ENCODE measurements at regions of chr5 and their contacts with region 1.

Region 1: DNA sequence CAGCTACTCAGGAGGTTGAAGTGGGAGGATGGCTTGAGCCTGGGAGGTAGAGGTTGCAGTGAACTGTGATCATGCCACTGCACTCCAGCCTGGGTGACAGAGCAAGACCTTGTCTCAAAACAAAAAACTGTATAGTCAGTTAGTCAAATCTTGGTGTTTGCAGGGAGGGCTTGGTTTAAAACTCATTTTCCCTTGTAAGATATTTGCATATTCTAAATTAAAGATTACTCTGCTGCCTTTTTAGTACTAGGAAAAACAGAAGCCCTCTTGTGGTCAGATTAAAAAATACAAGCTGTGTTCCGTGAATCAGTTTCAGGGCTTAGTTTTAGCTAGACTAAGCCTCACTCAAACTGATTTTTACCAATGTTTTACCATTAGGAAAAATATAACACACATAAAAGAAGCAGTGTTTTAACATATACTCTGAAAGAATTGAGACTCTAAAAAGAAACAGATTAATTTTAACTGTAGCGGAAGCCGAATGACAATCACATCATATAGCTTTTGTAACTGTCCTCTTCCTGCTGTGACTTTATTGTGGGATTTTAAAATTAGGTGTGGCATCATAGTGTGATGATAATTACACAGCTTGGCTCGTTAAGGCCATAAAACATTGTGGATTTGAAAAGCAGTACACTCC is 84.9 kb upstream of the BASP1 start:
- DNase-seq: no peak
- ATAC-seq: peak; percentile 65
- H3K4me3 Mint-ChIP-seq: no peak overlapping the region
- H3K27ac Mint-ChIP-seq: no peak overlapping the region
- H3K4me1 Mint-ChIP-seq: peaks cover 9% of the 10 kb centered on the region
- H3K27me3 Mint-ChIP-seq: peaks cover under 1% of the 10 kb centered on the region
- CTCF ChIP-seq: peak; percentile 65

Region 2: DNA sequence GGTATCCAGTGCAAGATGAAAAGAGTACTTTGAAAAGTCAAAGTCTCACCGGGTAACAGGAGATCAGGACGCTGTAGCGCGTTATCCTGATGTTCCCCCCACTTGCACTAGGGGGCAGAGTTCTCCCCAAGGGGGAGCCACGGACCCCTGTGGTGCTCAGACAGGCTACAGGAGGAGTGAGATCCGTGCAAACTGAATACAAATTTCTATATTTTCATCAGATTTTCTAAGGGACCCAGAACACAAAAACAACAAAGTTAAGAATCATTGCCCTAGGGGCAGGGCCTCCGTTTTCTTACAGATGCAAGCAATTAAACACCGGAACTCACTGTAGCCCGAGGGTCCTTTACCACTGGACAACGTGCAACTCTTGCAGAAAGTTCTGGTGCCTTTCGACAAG is 198.4 kb before region 1 on chr5:
- CTCF ChIA-PET with region 1: interaction called, 17 read pairs
- POLR2A ChIA-PET with region 1: no interaction called
- DNase-seq: peak; percentile 91
- ATAC-seq: peak; percentile 14
- H3K4me3 Mint-ChIP-seq: peak overlapping the region; percentile 87
- H3K27ac Mint-ChIP-seq: no peak overlapping the region
- H3K4me1 Mint-ChIP-seq: peaks cover 61% of the 10 kb centered on the region
- H3K27me3 Mint-ChIP-seq: peaks cover 78% of the 10 kb centered on the region
- CTCF ChIP-seq: peak; percentile 91

Region 3: DNA sequence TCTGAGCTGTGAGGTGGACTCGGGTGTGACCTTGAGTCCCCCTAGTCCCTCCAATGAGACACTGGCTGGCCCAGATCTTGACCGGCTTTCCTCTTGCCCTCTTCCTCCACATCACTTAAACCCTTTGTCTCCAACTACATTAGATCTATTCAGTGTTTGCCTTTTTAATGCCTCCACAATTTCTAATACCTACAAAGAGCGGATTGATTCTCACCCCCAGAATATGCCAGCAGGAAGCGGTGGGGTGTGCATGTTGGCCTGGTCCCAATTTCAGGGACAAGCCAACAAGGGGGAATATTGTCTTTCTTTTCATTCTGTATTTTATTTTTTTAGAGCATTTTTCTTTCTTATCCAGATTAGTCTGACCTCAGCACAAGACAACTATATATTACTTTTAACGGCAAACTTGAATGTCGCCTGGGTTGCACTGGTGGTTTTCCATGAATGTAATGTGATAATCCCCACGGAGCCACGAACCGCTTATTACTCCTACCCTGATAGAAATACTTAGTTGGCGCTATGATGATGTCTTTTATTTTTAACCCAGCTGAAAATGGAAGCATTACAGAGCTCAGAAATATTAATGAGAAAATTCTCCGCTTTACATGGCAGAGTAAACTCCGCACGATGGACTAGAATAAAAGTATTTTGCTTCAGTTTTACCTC is 128.0 kb before region 1 on chr5:
- CTCF ChIA-PET with region 1: no interaction called
- POLR2A ChIA-PET with region 1: no interaction called
- DNase-seq: no peak
- ATAC-seq: no peak
- H3K4me3 Mint-ChIP-seq: no peak overlapping the region
- H3K27ac Mint-ChIP-seq: no peak overlapping the region
- H3K4me1 Mint-ChIP-seq: no peaks in the 10 kb centered on the region
- H3K27me3 Mint-ChIP-seq: no peaks in the 10 kb centered on the region
- CTCF ChIP-seq: no peak

Region 4: GRCh38 chr5:17143335-17143734 is 10.8 kb after region 1 on chr5:
- CTCF ChIA-PET with region 1: interaction called, 24 read pairs
- POLR2A ChIA-PET with region 1: no interaction called
- DNase-seq: no peak
- ATAC-seq: no peak
- H3K4me3 Mint-ChIP-seq: no peak overlapping the region
- H3K27ac Mint-ChIP-seq: no peak overlapping the region
- H3K4me1 Mint-ChIP-seq: peaks cover 51% of the 10 kb centered on the region
- H3K27me3 Mint-ChIP-seq: peaks cover 51% of the 10 kb centered on the region
- CTCF ChIP-seq: no peak

Region 5: GRCh38 chr5:17157916-17158529 is 25.5 kb after region 1 on chr5:
- CTCF ChIA-PET with region 1: interaction called, 21 read pairs
- POLR2A ChIA-PET with region 1: no interaction called
- DNase-seq: no peak
- ATAC-seq: no peak
- H3K4me3 Mint-ChIP-seq: no peak overlapping the region
- H3K27ac Mint-ChIP-seq: no peak overlapping the region
- H3K4me1 Mint-ChIP-seq: no peaks in the 10 kb centered on the region; the same call in 1 of the 2 replicates
- H3K27me3 Mint-ChIP-seq: peaks cover 4% of the 10 kb centered on the region; the same call in 1 of the 2 replicates
- CTCF ChIP-seq: no peak

Region 6: GRCh38 chr5:17316970-17317459 is 184.5 kb after region 1 on chr5:
- CTCF ChIA-PET with region 1: no interaction called
- POLR2A ChIA-PET with region 1: no interaction called
- DNase-seq: no peak
- ATAC-seq: no peak
- H3K4me3 Mint-ChIP-seq: no peak overlapping the region
- H3K27ac Mint-ChIP-seq: no peak overlapping the region; the same call in 1 of the 2 replicates
- H3K4me1 Mint-ChIP-seq: peaks cover 25% of the 10 kb centered on the region
- H3K27me3 Mint-ChIP-seq: no peaks in the 10 kb centered on the region
- CTCF ChIP-seq: no peak

Measured in WTC11 (cell line).